ENCODE measurements at regions of chr3 and their contacts with region 1.

Region 1: GRCh38 chr3:71185733-71186455 is 397.6 kb downstream of the FOXP1 start:
- DNase-seq: peak; percentile 50
- H3K4me3 Mint-ChIP-seq: no peak overlapping the region
- H3K27ac Mint-ChIP-seq: peak overlapping the region; percentile 37
- H3K4me1 Mint-ChIP-seq: peaks cover 67% of the 10 kb centered on the region
- H3K27me3 Mint-ChIP-seq: no peaks in the 10 kb centered on the region

Region 2: DNA sequence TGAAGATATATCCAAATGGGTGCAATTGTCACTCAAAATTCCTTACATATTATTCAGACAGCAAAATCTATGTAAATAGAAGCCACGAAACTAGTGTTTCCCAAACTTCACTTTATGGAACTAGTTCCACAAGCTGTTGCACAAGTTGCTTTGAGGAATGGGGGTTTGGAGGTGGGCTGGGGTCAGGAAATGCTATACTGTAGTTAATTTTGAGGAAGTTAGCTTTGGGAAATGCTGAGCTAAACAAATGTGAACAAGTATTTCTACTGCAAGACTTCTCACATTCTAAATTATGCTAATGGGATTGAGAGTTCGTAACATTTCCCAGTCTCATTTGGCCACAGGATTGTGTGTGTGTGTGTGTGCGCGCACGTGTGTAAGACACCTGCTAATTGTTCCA is 1215.1 kb before region 1 on chr3:
- CTCF ChIA-PET with region 1: no interaction called
- intact Hi-C with region 1: no loop called
- DNase-seq: no peak
- H3K4me3 Mint-ChIP-seq: no peak overlapping the region
- H3K27ac Mint-ChIP-seq: no peak overlapping the region
- H3K4me1 Mint-ChIP-seq: no peaks in the 10 kb centered on the region
- H3K27me3 Mint-ChIP-seq: peaks cover 6% of the 10 kb centered on the region

Region 3: GRCh38 chr3:71160800-71161546 is 24.9 kb before region 1 on chr3:
- CTCF ChIA-PET with region 1: interaction called, 3 read pairs
- intact Hi-C with region 1: loop called (anchors 1 kb)
- DNase-seq: peak; percentile 44
- H3K4me3 Mint-ChIP-seq: peak overlapping the region; percentile 33
- H3K27ac Mint-ChIP-seq: peak overlapping the region; percentile 88
- H3K4me1 Mint-ChIP-seq: peaks cover 79% of the 10 kb centered on the region
- H3K27me3 Mint-ChIP-seq: no peaks in the 10 kb centered on the region

Region 4: DNA sequence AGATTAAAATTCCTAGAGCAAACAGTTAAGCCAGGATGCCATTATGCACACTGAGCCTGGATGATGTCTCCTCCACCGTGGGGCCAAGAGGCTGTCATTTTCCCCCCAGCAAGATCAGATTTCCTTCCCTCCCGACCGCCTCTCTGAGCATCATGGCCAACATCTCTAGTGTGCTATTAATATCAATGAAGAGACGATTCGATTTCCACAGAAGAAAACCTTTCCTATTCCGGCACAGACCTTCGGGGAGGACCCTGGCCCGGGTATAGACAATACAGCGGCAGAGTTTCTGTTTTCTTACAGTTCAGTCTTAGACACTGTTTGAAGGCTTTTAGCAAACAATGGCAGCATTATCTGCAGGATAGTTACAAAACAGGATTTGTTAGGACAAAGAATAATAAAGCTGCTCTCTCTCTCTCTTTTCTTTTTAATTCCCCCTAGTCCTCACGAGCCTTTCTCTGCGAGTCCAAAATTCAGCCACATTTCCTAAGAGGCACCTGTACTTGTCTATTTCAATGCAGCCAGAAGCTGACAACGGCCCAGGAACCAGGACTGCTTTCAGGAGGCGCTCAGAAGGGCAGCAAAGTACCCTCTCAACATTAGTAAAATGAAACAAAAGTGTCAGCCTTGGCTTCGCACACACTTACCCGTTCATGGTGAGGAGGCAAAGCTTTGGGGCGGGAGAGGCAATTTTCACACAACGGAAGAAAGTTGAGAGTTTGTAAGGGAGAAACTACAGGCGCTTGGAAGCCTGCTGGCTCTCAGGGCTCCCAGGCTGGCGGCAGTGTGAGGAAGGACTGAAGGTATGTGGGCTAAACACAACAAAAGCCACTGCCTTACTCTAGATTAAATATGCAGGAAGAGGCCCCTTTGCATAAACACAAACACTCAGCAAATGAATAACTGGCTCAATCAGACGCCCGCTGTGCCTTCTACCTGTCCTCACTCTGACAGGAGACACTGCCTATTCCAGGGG is 119.6 kb after region 1 on chr3:
- CTCF ChIA-PET with region 1: no interaction called
- intact Hi-C with region 1: no loop called
- DNase-seq: peak; percentile 44
- H3K4me3 Mint-ChIP-seq: peak overlapping the region; percentile 90
- H3K27ac Mint-ChIP-seq: peak overlapping the region; percentile 94
- H3K4me1 Mint-ChIP-seq: peaks cover 61% of the 10 kb centered on the region
- H3K27me3 Mint-ChIP-seq: no peaks in the 10 kb centered on the region